ENCODE measurements at regions of chr4 and their contacts with region 1.

Region 1: GRCh38 chr4:15695240-15695699 is 7.6 kb upstream of the BST1 start:
- DNase-seq: peak; percentile 41 to 71
- H3K4me3 ChIP-seq: no peak overlapping the region
- H3K27ac ChIP-seq: peak overlapping the region; percentile 65
- H3K4me1 ChIP-seq: peaks cover 34% of the 10 kb centered on the region
- H3K27me3 ChIP-seq: no peaks in the 10 kb centered on the region
- CTCF ChIP-seq: no peak

Region 2: GRCh38 chr4:15665753-15666365 is 29.4 kb before region 1 on chr4:
- CTCF ChIA-PET with region 1: no interaction called
- POLR2A ChIA-PET with region 1: interaction called, 18 read pairs
- intact Hi-C with region 1: no loop called
- DNase-seq: peak; percentile 41 to 97
- H3K4me3 ChIP-seq: no peak overlapping the region
- H3K27ac ChIP-seq: peak overlapping the region; percentile 96
- H3K4me1 ChIP-seq: peaks cover 19% of the 10 kb centered on the region
- H3K27me3 ChIP-seq: no peaks in the 10 kb centered on the region
- CTCF ChIP-seq: no peak

Region 3: DNA sequence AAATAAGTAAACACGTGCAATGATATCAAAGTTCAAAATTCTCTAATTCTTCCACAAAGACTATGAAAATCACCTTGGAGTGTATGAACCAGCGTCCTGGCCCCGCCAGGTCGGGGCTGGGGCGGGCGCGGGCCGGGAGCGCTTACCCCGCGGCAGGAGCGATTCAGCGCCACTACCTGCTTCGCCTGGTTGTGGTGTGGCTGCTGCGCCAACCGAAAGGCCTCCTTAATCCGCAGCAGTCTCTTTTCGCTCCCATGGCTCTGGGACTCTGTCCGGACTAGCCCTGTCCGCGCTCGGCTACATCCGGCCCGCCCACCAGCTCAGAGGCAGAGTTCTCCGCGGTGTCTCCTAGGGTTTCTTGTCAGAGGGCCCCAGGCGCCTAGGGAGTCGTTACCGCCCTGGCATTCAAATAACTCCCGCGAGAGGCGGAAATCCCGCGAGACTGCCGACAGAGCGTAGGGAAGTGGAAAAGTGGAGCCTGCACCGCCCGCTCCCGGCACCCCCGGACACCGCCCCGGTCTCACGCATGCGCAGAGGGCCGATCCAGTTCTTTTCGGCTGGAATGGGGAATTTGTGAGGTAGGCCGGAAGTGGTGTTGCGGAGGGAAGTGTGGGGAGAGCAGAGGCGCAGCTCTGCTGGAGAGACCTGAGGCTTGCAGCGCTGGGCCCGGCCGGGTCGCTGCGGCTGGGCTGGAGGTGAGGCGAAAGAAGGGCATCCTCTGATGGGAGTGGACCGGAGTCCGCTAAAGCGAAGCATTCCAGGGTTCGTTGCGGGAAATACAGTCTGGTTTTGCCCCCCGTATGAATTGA is 13.9 kb before region 1 on chr4 and contains the start of gene FAM200B:
- CTCF ChIA-PET with region 1: no interaction called
- POLR2A ChIA-PET with region 1: interaction called, 8 read pairs
- intact Hi-C with region 1: loop called (anchors 1 kb)
- DNase-seq: peak; percentile 93 to 100
- H3K4me3 ChIP-seq: peak within 1 kb of the TSS; percentile 79
- H3K27ac ChIP-seq: peak within 1 kb of the TSS; percentile 87
- H3K4me1 ChIP-seq: peaks cover 47% of the 10 kb centered on the region
- H3K27me3 ChIP-seq: no peaks in the 10 kb centered on the region
- CTCF ChIP-seq: no peak
- total RNA-seq, gene FAM200B: 20.5 and 32.4 TPM in 2 replicates

Region 4: DNA sequence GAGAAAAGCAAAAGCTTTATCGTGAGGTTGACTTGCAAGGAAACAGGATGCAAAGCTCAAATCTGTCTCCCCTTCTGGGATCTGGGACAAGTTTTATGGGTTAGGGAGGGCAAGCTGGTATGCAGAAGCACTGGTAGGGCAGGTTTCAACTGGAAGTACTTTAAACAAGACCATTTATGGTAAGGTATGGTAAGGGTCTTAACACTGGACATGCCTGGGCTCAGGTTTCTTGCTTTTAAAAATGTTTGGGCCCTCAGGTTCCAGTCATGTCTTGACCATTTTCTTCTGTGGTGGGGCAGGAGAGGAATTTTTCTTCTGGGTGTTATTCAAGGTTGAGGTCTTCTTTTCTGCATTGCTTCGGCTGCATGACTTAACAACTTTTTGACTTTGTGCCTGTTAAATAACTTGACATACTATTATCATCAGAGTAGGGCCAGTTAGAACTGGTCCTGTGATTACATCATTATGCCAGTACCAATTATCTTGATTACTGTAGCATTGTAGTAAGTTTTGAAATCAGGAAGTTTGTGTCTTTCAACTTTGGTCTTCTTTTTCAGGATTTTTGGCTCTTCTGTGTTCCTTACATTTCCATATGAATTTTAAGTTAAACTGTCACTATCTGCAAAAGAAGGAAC is 116.5 kb after region 1 on chr4:
- CTCF ChIA-PET with region 1: no interaction called
- POLR2A ChIA-PET with region 1: no interaction called
- intact Hi-C with region 1: no loop called
- DNase-seq: peak; percentile 20 to 71
- H3K4me3 ChIP-seq: no peak overlapping the region
- H3K27ac ChIP-seq: peak overlapping the region; percentile 54
- H3K4me1 ChIP-seq: peaks cover 10% of the 10 kb centered on the region; the same call in 1 of the 2 replicates
- H3K27me3 ChIP-seq: no peaks in the 10 kb centered on the region
- CTCF ChIP-seq: no peak

Region 5: DNA sequence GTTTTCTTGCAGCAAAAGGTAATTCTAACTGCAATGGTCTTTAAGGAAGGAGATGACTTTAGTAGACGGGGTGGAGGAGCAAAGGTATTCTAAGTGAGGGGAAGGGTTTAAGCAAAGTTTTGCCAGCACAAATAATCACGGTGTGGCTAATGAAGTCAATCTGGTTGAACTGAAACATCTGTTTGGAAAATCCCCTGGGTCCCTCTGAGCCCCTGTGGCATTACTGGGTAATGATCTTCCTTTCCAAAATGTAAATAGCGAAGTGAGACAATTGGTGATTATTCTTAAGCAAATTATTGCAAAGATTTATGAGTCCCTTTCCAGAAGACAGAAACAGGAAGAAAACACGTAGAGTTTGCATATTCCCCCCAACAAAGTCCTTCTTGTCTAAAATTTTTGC is 196.0 kb after region 1 on chr4:
- CTCF ChIA-PET with region 1: no interaction called
- POLR2A ChIA-PET with region 1: no interaction called
- intact Hi-C with region 1: no loop called
- DNase-seq: no peak
- H3K4me3 ChIP-seq: no peak overlapping the region
- H3K27ac ChIP-seq: no peak overlapping the region
- H3K4me1 ChIP-seq: peaks cover 22% of the 10 kb centered on the region
- H3K27me3 ChIP-seq: no peaks in the 10 kb centered on the region
- CTCF ChIP-seq: no peak

Region 6: GRCh38 chr4:16140520-16141249 is 445.4 kb after region 1 on chr4:
- CTCF ChIA-PET with region 1: no interaction called
- POLR2A ChIA-PET with region 1: no interaction called
- intact Hi-C with region 1: loop called (anchors 2 kb)
- DNase-seq: peak; percentile 82 to 95
- H3K4me3 ChIP-seq: no peak overlapping the region
- H3K27ac ChIP-seq: peak overlapping the region; percentile 68
- H3K4me1 ChIP-seq: peaks cover 23% of the 10 kb centered on the region
- H3K27me3 ChIP-seq: no peaks in the 10 kb centered on the region
- CTCF ChIP-seq: no peak

Measured in PC-9 (cell line).